Naive thymus-derived CD8-positive, alpha-beta T cell (primary cell): ENCODE measurements at regions of chr12 and their contacts with region 1.

Region 1: GRCh38 chr12:31896514-31897039 is 62.6 kb upstream of the RESF1 start:
- DNase-seq: peak; percentile 39 to 95 (median 86)
- ATAC-seq: peak; percentile 96 to 97
- H3K4me3 Mint-ChIP-seq: peak overlapping the region; percentile 55 to 87 (median 80)
- H3K27ac Mint-ChIP-seq: peak overlapping the region; percentile 91 to 99 (median 97)
- H3K4me1 Mint-ChIP-seq: peaks cover 21 to 76% (median 62%) of the 10 kb centered on the region in 4 donors
- H3K27me3 Mint-ChIP-seq: peaks cover 0 to 1% (median 0%) of the 10 kb centered on the region in 5 donors

Region 2: GRCh38 chr12:31659087-31659933 is 237.3 kb before region 1 on chr12 and contains the start of gene ETFBKMT:
- POLR2A ChIA-PET with region 1: interaction called, 10 read pairs
- DNase-seq: peak; percentile 85 to 96 (median 92)
- ATAC-seq: peak; percentile 97 to 99
- H3K4me3 Mint-ChIP-seq: peak within 1 kb of the TSS; percentile 88 to 99 (median 97)
- H3K27ac Mint-ChIP-seq: peak within 1 kb of the TSS; percentile 97 to 100 (median 99)
- H3K4me1 Mint-ChIP-seq: peaks cover 6 to 33% (median 13%) of the 10 kb centered on the region in 4 donors
- H3K27me3 Mint-ChIP-seq: no peaks in the 10 kb centered on the region
- polyA plus RNA-seq, gene ETFBKMT: 0.34 to 1.8 (median 0.62) TPM

Region 3: GRCh38 chr12:31797230-31797872 is 99.2 kb before region 1 on chr12:
- POLR2A ChIA-PET with region 1: interaction called, 42 read pairs
- DNase-seq: peak in 6 of 10 donors; percentile 10 to 43 (median 32)
- ATAC-seq: peak; percentile 76 to 83
- H3K4me3 Mint-ChIP-seq: peak overlapping the region; percentile 52 to 83 (median 72)
- H3K27ac Mint-ChIP-seq: peak overlapping the region; percentile 82 to 96 (median 90)
- H3K4me1 Mint-ChIP-seq: peaks cover 24 to 48% (median 41%) of the 10 kb centered on the region in 4 donors
- H3K27me3 Mint-ChIP-seq: no peaks in the 10 kb centered on the region

Region 4: DNA sequence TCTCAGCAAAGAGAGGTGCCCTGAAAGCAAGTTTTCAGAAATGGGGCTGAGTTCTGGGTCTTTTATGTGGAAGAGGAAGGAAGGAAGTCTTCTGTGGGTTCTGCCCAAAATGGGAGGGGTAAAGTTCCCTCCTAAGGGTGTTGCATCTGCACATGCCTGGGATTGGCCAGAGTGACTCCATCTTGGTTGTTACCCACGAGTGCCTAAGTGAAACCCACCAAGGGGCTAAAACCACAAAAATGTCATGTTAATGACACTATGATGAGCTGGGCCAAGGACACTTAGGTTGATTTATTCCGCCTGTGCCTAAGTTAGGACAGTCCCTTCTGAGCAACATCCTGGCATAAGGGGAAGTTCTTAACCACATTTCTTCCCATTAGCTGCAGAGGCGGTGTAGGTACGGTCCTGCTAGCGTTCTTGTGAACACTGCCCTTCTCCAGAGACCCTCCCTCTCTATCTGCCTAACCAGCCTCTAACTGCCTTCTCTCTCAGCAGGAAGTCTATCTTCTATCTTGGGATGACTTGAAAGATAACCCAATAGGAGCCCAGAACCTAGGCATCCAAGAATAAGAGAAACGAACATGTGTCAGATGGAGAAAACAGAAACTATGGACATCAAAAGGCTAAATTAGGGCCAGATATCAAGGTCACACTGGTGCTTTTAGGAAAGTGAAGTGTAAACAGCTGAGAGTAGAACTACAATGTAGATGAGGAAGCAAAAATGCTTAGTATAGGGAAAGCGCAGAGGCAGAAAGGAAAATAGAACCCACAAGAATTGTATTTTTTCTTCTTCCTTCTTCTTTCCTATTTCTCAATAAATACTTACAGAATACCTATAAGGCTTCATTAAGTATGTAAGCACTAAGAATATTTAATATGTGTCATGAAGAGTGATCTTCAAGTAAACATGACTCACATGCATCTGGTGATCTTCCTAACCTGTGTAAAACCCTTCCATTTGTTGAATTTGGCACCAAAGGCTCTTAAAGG is 63.5 kb before region 1 on chr12:
- POLR2A ChIA-PET with region 1: interaction called, 13 read pairs
- DNase-seq: peak in 9 of 10 donors; percentile 2 to 72 (median 52)
- ATAC-seq: peak; percentile 81 to 88
- H3K4me3 Mint-ChIP-seq: peak overlapping the region; percentile 22 to 76 (median 69)
- H3K27ac Mint-ChIP-seq: peak overlapping the region; percentile 72 to 88 (median 80)
- H3K4me1 Mint-ChIP-seq: peaks cover 15 to 73% (median 57%) of the 10 kb centered on the region in 4 donors
- H3K27me3 Mint-ChIP-seq: no peaks in the 10 kb centered on the region

Region 5: DNA sequence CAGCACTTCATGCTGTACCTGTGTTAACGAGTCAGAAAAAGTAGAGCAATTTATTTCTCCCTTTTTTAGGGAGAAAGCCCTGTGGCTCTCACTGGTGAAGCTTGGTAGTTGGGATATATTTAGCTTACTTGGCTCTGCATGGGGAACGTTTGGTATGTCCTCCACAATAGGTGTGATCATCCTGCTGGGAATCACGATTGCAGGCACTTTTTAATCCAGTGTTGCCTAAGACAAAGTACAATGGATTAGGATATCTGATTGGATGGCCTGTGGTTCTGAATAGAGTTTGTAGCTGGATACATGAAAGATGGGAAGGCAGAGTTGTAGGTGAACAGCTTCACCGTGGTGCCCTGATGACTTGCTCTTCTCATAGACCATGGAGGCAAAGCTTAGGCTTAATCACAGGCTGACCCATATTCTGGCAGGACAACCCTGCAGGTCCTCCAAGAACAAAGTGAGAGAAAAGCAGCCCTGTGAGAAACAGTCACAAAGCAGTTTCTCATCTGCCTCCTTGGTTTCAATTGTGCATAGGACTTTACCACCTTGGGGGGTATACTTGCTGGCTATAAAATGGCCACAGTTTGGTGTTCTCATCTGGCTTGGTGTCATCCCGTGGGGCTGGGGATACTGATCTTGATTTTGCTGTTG is 70.1 kb after region 1 on chr12:
- POLR2A ChIA-PET with region 1: interaction called, 112 read pairs
- DNase-seq: no peak
- ATAC-seq: peak; percentile 5 to 7
- H3K4me3 Mint-ChIP-seq: peak overlapping the region; percentile 93 to 99 (median 97)
- H3K27ac Mint-ChIP-seq: peak overlapping the region; percentile 94 to 99 (median 97)
- H3K4me1 Mint-ChIP-seq: peaks cover 47 to 99% (median 88%) of the 10 kb centered on the region in 4 donors
- H3K27me3 Mint-ChIP-seq: no peaks in the 10 kb centered on the region